Activated CD4-positive, alpha-beta T cell treated with anti-CD3 and anti-CD28 coated beads for 36 hours (primary cell): ENCODE measurements at regions of chr1 and their contacts with region 1.

Region 1: DNA sequence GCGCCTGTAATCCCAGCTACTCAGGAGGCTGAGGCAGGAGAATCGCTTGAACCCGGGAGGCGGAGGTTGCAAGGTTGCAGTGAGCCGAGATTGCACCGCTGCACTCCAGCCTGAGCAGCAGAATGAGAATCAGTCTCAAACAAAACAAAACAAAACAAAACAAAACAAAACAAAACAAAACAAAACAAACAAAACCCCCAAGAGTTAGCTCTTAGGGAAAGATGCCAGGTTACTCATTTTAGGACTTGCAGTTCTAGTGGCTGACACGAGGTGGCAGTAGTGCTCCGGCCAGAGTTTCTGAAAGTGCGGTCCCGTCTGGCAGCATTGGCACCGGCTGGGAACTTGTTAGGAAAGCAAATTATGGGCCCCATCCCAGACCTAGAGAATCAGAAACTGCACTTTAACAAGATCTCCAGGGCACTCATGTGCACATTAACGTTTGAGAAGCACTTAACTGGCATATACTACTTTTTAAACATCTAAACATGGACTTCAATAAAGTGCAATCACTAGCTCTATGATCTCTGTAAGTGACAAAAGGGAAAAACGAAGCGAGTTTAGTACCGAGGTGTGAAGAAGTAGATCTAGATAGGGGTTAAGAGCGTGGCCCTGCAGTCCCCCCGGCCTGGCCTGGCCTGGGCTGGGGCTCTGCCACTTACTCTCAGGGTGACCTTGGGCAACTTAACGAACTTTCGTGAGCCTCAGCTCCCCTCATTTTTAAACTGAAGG is 41.9 kb upstream of the TNFRSF1B start:
- DNase-seq: peak; percentile 86
- ATAC-seq: peak; percentile 35
- H3K4me3 Mint-ChIP-seq: no peak overlapping the region
- H3K27ac Mint-ChIP-seq: peak overlapping the region; percentile 20
- H3K4me1 Mint-ChIP-seq: peaks cover 49% of the 10 kb centered on the region
- H3K27me3 Mint-ChIP-seq: no peaks in the 10 kb centered on the region

Region 2: GRCh38 chr1:12113433-12114339 is 11.2 kb before region 1 on chr1:
- CTCF ChIA-PET with region 1: interaction called, 14 read pairs
- POLR2A ChIA-PET with region 1: no interaction called
- intact Hi-C with region 1: no loop called
- DNase-seq: no peak
- ATAC-seq: peak; percentile 28
- H3K4me3 Mint-ChIP-seq: no peak overlapping the region
- H3K27ac Mint-ChIP-seq: no peak overlapping the region
- H3K4me1 Mint-ChIP-seq: peaks cover 5% of the 10 kb centered on the region
- H3K27me3 Mint-ChIP-seq: no peaks in the 10 kb centered on the region

Region 3: DNA sequence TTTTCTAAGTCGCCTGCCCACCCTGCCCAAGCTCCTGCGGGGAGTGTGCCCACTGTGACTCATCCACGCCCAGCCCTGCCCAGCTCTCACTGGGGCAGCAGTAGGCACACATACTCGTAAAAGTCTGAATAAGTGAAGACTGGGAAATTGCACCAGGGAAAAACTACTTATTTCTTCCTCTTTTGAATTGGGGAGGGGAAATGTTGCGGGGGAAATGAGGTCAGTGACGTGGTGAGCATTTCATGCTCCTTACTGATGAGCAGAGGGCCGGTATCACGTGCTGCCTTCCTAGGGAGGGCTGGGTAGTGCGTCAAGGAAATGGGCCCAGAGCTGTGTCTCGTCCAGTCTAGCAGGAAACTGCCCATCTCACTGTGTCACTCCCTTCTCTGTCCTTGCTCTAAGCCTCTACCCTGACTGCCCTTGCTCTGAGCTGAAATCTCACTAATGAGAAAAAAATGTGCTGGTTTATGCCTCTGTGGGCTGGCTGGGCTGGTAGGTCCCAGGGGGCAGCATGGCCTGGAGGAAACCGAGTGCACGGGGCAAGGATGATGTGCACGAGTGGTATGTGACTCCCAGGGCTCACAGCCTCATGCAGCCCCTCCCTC is 28.4 kb after region 1 on chr1:
- CTCF ChIA-PET with region 1: interaction called, 11 read pairs
- POLR2A ChIA-PET with region 1: no interaction called
- intact Hi-C with region 1: loop called in 1 of 2 experiments (anchors 1 kb)
- DNase-seq: peak; percentile 50
- ATAC-seq: no peak
- H3K4me3 Mint-ChIP-seq: no peak overlapping the region
- H3K27ac Mint-ChIP-seq: peak overlapping the region; percentile 56
- H3K4me1 Mint-ChIP-seq: peaks cover 85% of the 10 kb centered on the region
- H3K27me3 Mint-ChIP-seq: no peaks in the 10 kb centered on the region

Region 4: DNA sequence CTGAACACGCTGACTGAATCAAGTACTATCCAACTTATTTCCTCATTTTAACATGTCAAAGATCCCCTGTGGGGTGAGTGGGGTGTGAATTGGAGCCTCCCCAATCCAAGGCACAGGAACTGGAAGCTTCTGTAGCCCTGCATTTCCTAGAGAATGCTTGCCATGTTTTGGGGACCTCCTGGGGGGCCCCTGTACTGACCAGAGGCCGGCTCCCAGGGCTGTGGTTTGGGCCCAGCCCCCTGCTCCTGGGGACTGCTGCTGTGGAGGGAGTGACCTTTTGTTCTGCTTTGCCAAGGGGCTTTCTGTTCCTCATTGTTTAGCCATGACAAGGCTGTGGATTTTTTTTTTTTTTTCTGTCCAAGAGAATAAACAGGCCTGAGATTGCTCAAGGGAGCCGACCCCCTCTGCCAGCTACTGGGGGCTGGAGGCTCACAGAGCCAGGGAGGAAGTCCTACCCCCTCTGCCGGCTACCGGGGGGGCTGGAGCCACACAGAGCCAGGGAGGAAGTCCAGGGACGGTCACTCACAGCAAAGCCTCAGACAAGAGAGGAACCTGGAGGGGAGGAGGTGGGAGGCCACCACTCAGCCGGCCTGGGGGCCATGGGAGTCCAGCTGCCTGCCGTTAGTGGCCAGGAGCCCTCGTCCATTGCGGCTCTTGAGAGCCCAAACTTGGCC is 59.3 kb after region 1 on chr1:
- CTCF ChIA-PET with region 1: interaction called, 23 read pairs
- POLR2A ChIA-PET with region 1: no interaction called
- intact Hi-C with region 1: loop called in 1 of 2 experiments (anchors 5 kb)
- DNase-seq: no peak
- ATAC-seq: no peak
- H3K4me3 Mint-ChIP-seq: no peak overlapping the region
- H3K27ac Mint-ChIP-seq: peak overlapping the region; percentile 4
- H3K4me1 Mint-ChIP-seq: peaks cover 56% of the 10 kb centered on the region
- H3K27me3 Mint-ChIP-seq: no peaks in the 10 kb centered on the region

Region 5: GRCh38 chr1:12215118-12215961 is 90.5 kb after region 1 on chr1:
- CTCF ChIA-PET with region 1: interaction called, 265 read pairs
- POLR2A ChIA-PET with region 1: no interaction called
- intact Hi-C with region 1: no loop called
- DNase-seq: no peak
- ATAC-seq: no peak
- H3K4me3 Mint-ChIP-seq: no peak overlapping the region
- H3K27ac Mint-ChIP-seq: no peak overlapping the region
- H3K4me1 Mint-ChIP-seq: peaks cover 6% of the 10 kb centered on the region
- H3K27me3 Mint-ChIP-seq: no peaks in the 10 kb centered on the region

Region 6: DNA sequence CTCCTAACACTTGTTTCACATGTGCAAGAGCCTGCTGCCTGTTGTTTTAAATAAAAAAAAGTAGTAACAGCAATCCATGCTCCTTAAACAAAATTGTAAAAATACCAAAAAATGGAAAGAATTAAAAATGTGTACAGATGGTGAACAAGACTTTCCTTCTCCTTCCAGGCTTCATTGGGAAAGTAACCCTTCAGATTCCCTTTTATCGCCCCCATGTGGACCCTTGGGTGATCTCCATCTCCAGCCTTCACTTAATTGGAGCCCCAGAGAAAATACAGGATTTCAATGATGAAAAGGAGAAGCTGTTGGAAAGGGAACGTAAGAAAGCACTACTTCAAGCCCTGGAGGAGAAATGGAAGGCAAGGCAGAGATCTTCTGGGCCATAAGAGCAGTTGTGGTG is 119.2 kb after region 1 on chr1:
- CTCF ChIA-PET with region 1: interaction called, 10 read pairs
- POLR2A ChIA-PET with region 1: no interaction called
- intact Hi-C with region 1: loop called in 1 of 2 experiments (anchors 1 kb)
- DNase-seq: peak; percentile 29
- ATAC-seq: no peak
- H3K4me3 Mint-ChIP-seq: no peak overlapping the region
- H3K27ac Mint-ChIP-seq: no peak overlapping the region
- H3K4me1 Mint-ChIP-seq: no peaks in the 10 kb centered on the region
- H3K27me3 Mint-ChIP-seq: no peaks in the 10 kb centered on the region

Region 7: DNA sequence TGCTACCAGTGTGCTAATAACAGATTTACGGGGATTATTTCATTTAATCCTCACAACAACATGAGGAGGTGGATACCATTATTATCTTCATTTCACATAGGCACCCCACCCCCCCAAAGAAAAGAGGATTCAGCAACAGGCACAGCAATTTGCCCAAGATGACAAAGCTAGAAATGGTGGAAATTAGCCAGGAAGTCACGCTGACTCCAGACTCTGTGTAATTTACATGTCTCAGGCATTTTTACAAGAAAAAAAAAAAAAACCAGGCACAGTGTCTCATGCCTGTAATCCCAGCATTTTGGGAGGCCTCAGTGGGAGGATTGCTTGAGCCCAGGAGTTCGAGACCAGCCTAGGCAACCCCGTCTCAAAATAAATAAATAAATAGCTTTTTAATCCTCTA is 1537.6 kb after region 1 on chr1:
- CTCF ChIA-PET with region 1: no interaction called
- POLR2A ChIA-PET with region 1: no interaction called
- intact Hi-C with region 1: no loop called
- DNase-seq: no peak
- ATAC-seq: no peak
- H3K4me3 Mint-ChIP-seq: no peak overlapping the region
- H3K27ac Mint-ChIP-seq: no peak overlapping the region
- H3K4me1 Mint-ChIP-seq: peaks cover 4% of the 10 kb centered on the region
- H3K27me3 Mint-ChIP-seq: peaks cover 5% of the 10 kb centered on the region